Activated CD4-positive, alpha-beta memory T cell treated with anti-CD3 and anti-CD28 coated beads, Interleukin-2, amount 10 ng/mL, durations not matched to agents 7 days and 5 days (primary cell): ENCODE measurements at regions of chr3 and their contacts with region 1.

Region 1: DNA sequence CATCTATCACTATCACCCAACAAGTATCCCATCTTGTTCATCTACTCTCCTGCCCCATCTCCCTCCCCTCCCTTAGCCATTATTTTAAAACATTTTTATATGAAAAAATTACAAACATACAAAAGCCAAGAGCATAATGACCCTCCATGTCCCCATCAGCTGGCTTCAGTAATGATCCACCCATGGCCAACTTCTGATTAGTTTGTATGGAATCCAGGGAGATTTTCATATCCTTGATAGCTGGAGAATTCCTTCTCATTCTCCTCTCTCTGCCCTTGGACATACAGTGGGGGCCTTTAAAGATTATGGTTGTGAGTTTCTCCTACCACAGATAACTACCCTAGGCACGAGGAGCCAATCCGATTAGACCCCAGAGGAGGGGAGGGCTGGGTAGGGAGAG is 40.2 kb downstream of the IRAK2 start:
- DNase-seq: no peak
- H3K4me3 Mint-ChIP-seq: no peak overlapping the region
- H3K27ac Mint-ChIP-seq: no peak overlapping the region
- H3K4me1 Mint-ChIP-seq: peaks cover 42% of the 10 kb centered on the region
- H3K27me3 Mint-ChIP-seq: no peaks in the 10 kb centered on the region

Region 2: GRCh38 chr3:10192953-10193691 is 11.8 kb before region 1 on chr3:
- CTCF ChIA-PET with region 1: interaction called, 12 read pairs
- POLR2A ChIA-PET with region 1: interaction called, 23 read pairs
- DNase-seq: peak; percentile 69
- H3K4me3 Mint-ChIP-seq: peak overlapping the region; percentile 7
- H3K27ac Mint-ChIP-seq: peak overlapping the region; percentile 98
- H3K4me1 Mint-ChIP-seq: peaks cover 82% of the 10 kb centered on the region
- H3K27me3 Mint-ChIP-seq: no peaks in the 10 kb centered on the region

Region 3: GRCh38 chr3:10255835-10256234 is 50.9 kb after region 1 on chr3:
- CTCF ChIA-PET with region 1: no interaction called
- POLR2A ChIA-PET with region 1: no interaction called
- DNase-seq: no peak
- H3K4me3 Mint-ChIP-seq: no peak overlapping the region
- H3K27ac Mint-ChIP-seq: no peak overlapping the region
- H3K4me1 Mint-ChIP-seq: peaks cover 76% of the 10 kb centered on the region
- H3K27me3 Mint-ChIP-seq: no peaks in the 10 kb centered on the region